HEK293 (cell line): ENCODE measurements at regions of chr3 and their contacts with region 1.

Region 1: DNA sequence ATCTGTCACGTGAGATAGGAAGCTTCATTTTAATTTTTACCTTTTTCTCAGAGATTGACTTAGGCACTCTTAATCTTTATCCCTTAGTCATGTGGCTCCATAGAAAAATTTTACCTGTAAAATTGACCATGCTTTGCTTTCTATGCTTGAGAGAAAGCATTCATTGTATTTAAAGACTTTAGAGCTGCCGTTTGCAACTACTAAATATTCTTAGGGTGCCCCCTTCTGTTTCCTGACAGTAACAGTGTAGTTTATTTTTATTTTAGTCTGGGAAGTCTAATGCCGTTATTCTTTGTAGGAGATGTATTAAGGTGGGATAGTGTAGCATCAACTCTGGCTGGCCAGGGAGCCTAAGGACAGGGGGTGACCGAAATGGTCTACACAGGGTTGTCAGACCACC is 84.5 kb upstream of the SYNPR start:
- H3K4me3 ChIP-seq: no peak overlapping the region
- H3K27ac ChIP-seq: no peak overlapping the region
- H3K4me1 ChIP-seq: no peaks in the 10 kb centered on the region
- CTCF ChIP-seq: no peak

Region 2: DNA sequence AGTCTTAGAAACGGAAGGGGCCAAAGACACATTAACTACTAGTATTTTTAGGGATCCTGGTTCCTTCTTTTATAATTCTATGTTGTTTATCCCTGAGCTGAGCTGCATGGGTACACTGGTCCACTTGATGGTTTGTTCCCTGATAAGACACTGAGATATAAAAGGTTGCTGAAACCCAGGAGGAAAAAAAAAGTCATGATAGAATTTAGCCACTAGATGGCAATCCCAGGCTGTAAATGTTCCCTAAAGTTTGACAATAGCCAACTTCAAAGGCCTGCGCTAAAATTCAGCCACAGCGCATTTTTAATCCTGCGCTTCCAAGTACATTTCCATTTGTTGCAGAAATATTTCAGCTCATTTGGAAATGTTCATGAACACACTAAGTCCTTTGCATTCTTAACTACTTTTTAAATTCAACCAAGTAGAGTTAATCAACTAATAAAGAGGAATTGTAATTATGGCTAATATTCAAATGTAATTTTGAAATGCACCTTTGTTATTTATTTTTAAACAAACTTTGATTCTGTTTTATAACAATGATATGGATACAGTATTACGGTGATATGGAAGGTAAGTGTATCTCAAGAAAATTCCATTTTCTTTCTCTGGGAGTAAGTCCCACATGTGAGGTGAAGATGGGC is 571.0 kb before region 1 on chr3:
- CTCF ChIA-PET with region 1: interaction called, 11 read pairs
- POLR2A ChIA-PET with region 1: no interaction called
- H3K4me3 ChIP-seq: no peak overlapping the region
- H3K27ac ChIP-seq: no peak overlapping the region
- H3K4me1 ChIP-seq: no peaks in the 10 kb centered on the region
- CTCF ChIP-seq: peak; percentile 9; the same call in 1 of the 2 replicates

Region 3: GRCh38 chr3:62665598-62666437 is 527.8 kb before region 1 on chr3:
- CTCF ChIA-PET with region 1: interaction called, 45 read pairs
- POLR2A ChIA-PET with region 1: no interaction called
- H3K4me3 ChIP-seq: no peak overlapping the region
- H3K27ac ChIP-seq: no peak overlapping the region
- H3K4me1 ChIP-seq: no peaks in the 10 kb centered on the region
- CTCF ChIP-seq: peak; percentile 87

Region 4: DNA sequence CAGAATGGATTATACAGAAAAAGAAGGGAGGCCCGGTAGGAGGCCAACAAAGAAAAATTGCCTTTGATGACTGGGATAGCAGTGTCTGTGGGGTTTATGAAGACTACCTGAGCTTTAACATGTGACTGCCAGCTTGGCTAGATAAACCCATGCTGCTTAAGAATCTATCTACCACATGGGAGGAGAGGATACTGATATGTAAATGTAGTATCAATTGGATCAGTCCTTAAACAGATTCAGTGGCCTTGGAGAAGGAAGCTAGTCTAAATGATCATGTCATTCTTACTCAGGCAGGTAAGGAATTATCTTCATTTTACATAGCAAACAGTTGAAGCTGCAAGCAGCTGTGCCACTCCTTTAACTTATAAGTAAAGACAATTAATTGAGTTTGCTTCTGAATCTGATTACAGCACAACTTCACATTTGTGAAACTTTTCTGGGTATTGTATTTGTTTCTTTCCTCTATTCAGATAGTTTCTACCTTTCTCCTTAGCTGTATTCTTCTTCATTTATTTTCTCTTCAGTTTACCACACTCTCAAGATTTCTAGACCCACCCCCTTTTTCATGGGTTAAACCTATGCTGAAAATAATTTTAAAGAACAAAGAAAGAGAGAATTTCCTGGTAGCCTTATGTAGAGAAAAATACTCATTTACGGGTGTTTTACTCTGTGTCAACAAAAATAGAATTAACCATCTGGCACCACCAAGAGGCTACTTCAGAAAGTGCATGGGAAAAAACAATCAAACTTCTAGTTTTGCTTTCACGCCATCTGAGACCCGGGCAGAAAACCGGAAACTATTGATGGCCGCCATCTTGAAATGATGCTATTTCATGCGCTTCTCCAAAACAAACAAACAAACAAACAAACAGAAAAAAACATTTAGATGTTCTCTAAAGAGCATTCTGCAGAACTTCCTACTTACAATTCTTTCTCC is 34.7 kb after region 1 on chr3:
- CTCF ChIA-PET with region 1: interaction called, 10 read pairs
- POLR2A ChIA-PET with region 1: no interaction called
- H3K4me3 ChIP-seq: no peak overlapping the region
- H3K27ac ChIP-seq: no peak overlapping the region
- H3K4me1 ChIP-seq: no peaks in the 10 kb centered on the region
- CTCF ChIP-seq: no peak; the same call in 1 of the 2 replicates